ENCODE measurements at regions of chr19 and their contacts with region 1.

Region 1: GRCh38 chr19:41541990-41542584 is 33.9 kb upstream of the CEACAM21 start:
- DNase-seq: peak; percentile 66
- H3K4me3 Mint-ChIP-seq: peak overlapping the region; percentile 68
- H3K27ac Mint-ChIP-seq: peak overlapping the region; percentile 73
- H3K4me1 Mint-ChIP-seq: peaks cover 82% of the 10 kb centered on the region
- H3K27me3 Mint-ChIP-seq: no peaks in the 10 kb centered on the region

Region 2: GRCh38 chr19:41449079-41449864 is 92.8 kb before region 1 on chr19:
- intact Hi-C with region 1: loop called (anchors 1 kb)
- DNase-seq: peak; percentile 60
- H3K4me3 Mint-ChIP-seq: peak overlapping the region; percentile 81
- H3K27ac Mint-ChIP-seq: no peak overlapping the region
- H3K4me1 Mint-ChIP-seq: peaks cover 15% of the 10 kb centered on the region
- H3K27me3 Mint-ChIP-seq: peaks cover 14% of the 10 kb centered on the region

Region 3: GRCh38 chr19:41554907-41555306 is 12.8 kb after region 1 on chr19:
- intact Hi-C with region 1: loop called (anchors 1 kb)
- DNase-seq: no peak
- H3K4me3 Mint-ChIP-seq: peak overlapping the region; percentile 55
- H3K27ac Mint-ChIP-seq: peak overlapping the region; percentile 66
- H3K4me1 Mint-ChIP-seq: peaks cover 81% of the 10 kb centered on the region
- H3K27me3 Mint-ChIP-seq: no peaks in the 10 kb centered on the region

Region 4: GRCh38 chr19:41570639-41571112 is 28.6 kb after region 1 on chr19:
- intact Hi-C with region 1: loop called (anchors 1 kb)
- DNase-seq: peak; percentile 76
- H3K4me3 Mint-ChIP-seq: no peak overlapping the region
- H3K27ac Mint-ChIP-seq: peak overlapping the region; percentile 27
- H3K4me1 Mint-ChIP-seq: peaks cover 27% of the 10 kb centered on the region
- H3K27me3 Mint-ChIP-seq: no peaks in the 10 kb centered on the region

Region 5: DNA sequence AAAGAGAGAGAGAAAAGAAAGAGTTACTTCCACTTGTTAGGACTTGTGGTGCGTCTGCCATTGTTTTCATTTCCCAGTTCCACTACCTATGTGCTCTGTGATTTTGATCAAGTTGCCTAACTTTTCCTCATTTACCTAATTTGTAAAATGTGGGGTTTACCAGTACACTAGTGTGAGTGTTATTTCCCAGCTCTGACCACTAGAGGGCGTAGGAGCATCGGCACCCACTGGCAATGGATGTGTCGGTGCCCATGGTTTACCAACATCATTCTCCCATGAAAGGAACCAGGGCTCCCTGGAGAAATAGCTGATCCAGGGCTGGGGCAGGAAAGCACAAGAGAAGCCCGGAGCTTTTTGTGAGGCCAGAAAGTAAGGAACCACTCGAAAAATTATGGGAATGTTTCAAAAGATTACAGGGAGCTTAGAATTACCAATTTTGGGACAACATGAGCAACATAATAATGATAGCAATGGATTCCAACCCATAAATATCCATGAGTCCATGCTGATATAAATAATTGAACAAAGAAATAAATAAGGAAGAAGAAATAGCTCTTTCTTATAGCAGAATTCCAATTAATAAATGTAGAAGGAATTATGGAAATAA is 99.9 kb after region 1 on chr19:
- intact Hi-C with region 1: no loop called
- DNase-seq: peak; percentile 48
- H3K4me3 Mint-ChIP-seq: no peak overlapping the region
- H3K27ac Mint-ChIP-seq: no peak overlapping the region
- H3K4me1 Mint-ChIP-seq: no peaks in the 10 kb centered on the region
- H3K27me3 Mint-ChIP-seq: no peaks in the 10 kb centered on the region

Region 6: GRCh38 chr19:41945135-41945766 is 403.2 kb after region 1 on chr19:
- intact Hi-C with region 1: loop called (anchors 10 kb)
- DNase-seq: peak; percentile 70
- H3K4me3 Mint-ChIP-seq: peak overlapping the region; percentile 71
- H3K27ac Mint-ChIP-seq: peak overlapping the region; percentile 94
- H3K4me1 Mint-ChIP-seq: peaks cover 54% of the 10 kb centered on the region
- H3K27me3 Mint-ChIP-seq: peaks cover 7% of the 10 kb centered on the region